ENCODE measurements at regions of chr11 and their contacts with region 1.

Region 1: GRCh38 chr11:134050541-134051383 is 18.1 kb upstream of the JAM3 start:
- DNase-seq: peak; percentile 81
- H3K4me3 Mint-ChIP-seq: peak overlapping the region; percentile 67
- H3K27ac Mint-ChIP-seq: peak overlapping the region; percentile 74
- H3K4me1 Mint-ChIP-seq: peaks cover 5% of the 10 kb centered on the region
- H3K27me3 Mint-ChIP-seq: peaks cover 24% of the 10 kb centered on the region

Region 2: GRCh38 chr11:134033696-134034491 is 16.9 kb before region 1 on chr11:
- CTCF ChIA-PET with region 1: interaction called, 36 read pairs
- POLR2A ChIA-PET with region 1: no interaction called
- intact Hi-C with region 1: no loop called
- DNase-seq: peak; percentile 77
- H3K4me3 Mint-ChIP-seq: peak overlapping the region; percentile 16
- H3K27ac Mint-ChIP-seq: no peak overlapping the region
- H3K4me1 Mint-ChIP-seq: peaks cover 46% of the 10 kb centered on the region
- H3K27me3 Mint-ChIP-seq: no peaks in the 10 kb centered on the region

Region 3: DNA sequence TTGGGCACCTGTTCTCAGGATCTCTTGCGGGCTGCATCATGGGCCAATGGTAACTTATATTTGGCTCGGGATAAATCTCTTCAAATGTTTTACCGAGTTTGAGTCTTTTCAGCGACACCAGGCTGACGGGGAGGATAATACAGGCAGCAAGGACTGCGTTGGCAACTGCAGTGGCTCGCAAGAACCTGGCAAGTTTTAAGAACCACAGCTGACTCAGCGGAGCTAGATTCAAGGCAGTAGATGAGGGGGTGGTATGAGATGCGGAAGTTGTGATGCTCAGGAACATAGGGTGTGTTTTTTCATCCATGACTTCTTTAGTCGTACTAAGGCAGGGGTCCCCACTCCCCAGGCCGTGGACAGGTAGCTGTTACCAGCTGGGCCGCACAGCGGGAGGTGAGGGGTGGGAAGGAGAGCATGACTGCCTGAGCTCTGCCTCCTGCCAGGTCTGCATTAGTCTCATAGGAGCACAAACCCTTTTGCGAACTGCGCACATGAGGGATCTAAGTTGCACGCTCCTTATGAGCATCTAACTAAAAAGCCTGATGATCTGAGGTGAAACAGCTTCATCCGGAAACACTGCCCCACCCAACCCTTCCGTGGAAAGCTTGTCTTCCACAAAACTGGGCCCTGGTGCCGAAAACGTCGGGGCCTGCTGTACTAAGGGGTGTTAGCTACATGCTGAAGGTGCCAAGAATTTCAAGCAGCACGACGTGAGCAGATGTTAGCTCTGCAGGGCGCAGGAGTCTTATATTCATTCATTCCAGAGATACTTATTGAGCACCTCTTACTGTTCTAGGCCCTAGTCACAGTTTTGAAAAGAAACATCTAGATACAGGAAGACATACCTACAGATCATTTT is 11.7 kb after region 1 on chr11:
- CTCF ChIA-PET with region 1: interaction called, 14 read pairs
- POLR2A ChIA-PET with region 1: interaction called, 5 read pairs
- intact Hi-C with region 1: no loop called
- DNase-seq: no peak
- H3K4me3 Mint-ChIP-seq: no peak overlapping the region
- H3K27ac Mint-ChIP-seq: no peak overlapping the region
- H3K4me1 Mint-ChIP-seq: peaks cover 9% of the 10 kb centered on the region
- H3K27me3 Mint-ChIP-seq: peaks cover 25% of the 10 kb centered on the region

Region 4: GRCh38 chr11:134098566-134099184 is 47.9 kb after region 1 on chr11:
- CTCF ChIA-PET with region 1: interaction called, 15 read pairs
- POLR2A ChIA-PET with region 1: no interaction called
- intact Hi-C with region 1: loop called (anchors 2 kb)
- DNase-seq: no peak
- H3K4me3 Mint-ChIP-seq: no peak overlapping the region
- H3K27ac Mint-ChIP-seq: no peak overlapping the region
- H3K4me1 Mint-ChIP-seq: no peaks in the 10 kb centered on the region
- H3K27me3 Mint-ChIP-seq: peaks cover 1% of the 10 kb centered on the region

Region 5: DNA sequence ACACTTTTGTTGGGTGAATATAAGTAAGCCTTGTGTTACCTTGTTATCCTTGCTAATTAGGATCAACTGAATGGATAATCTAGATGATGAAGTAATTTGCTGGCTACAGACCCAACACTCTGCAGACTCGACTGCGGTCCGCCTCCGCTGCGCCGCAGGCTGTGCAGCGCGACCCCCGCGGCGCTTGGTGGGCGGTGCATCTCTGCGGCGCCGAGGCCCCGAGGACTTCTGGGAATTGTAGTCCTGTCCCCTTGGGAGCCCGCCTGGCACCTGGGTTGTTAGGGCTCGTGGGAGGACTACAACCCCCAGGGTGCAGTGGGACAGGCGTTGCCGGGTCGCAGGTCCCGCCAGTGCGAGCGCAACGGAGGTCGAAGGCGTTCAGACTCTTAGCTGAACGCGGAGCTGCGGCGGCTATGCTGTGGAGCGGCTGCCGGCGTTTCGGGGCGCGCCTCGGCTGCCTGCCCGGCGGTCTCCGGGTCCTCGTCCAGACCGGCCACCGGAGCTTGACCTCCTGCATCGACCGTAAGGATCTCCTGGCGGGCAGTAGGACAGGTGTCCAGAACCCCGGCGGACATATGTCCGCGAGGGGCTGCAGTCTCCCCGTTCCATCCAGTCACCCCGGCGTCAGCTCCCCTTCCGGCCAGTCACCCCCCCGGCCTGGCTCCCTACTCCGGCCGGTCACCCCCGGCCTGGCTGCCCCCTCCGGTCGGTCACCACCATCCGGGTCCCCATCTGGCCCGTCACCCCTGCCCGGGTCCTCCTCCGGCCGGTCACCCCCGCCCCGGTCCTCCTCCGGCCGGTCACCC is 202.6 kb after region 1 on chr11 and contains the starts of genes ACAD8 and THYN1:
- CTCF ChIA-PET with region 1: no interaction called
- POLR2A ChIA-PET with region 1: no interaction called
- intact Hi-C with region 1: no loop called
- DNase-seq: peak; percentile 97
- H3K4me3 Mint-ChIP-seq: peak within 1 kb of the TSS; percentile 89
- H3K27ac Mint-ChIP-seq: peak within 1 kb of the TSS; percentile 89
- H3K4me1 Mint-ChIP-seq: peaks cover 40% of the 10 kb centered on the region
- H3K27me3 Mint-ChIP-seq: no peaks in the 10 kb centered on the region
- total RNA-seq, gene ACAD8: 20.9 to 22.1 TPM
- total RNA-seq, gene THYN1: 74.0 to 74.3 TPM